Naive thymus-derived CD4-positive, alpha-beta T cell (primary cell): ENCODE measurements at regions of chr9 and their contacts with region 1.

Region 1: DNA sequence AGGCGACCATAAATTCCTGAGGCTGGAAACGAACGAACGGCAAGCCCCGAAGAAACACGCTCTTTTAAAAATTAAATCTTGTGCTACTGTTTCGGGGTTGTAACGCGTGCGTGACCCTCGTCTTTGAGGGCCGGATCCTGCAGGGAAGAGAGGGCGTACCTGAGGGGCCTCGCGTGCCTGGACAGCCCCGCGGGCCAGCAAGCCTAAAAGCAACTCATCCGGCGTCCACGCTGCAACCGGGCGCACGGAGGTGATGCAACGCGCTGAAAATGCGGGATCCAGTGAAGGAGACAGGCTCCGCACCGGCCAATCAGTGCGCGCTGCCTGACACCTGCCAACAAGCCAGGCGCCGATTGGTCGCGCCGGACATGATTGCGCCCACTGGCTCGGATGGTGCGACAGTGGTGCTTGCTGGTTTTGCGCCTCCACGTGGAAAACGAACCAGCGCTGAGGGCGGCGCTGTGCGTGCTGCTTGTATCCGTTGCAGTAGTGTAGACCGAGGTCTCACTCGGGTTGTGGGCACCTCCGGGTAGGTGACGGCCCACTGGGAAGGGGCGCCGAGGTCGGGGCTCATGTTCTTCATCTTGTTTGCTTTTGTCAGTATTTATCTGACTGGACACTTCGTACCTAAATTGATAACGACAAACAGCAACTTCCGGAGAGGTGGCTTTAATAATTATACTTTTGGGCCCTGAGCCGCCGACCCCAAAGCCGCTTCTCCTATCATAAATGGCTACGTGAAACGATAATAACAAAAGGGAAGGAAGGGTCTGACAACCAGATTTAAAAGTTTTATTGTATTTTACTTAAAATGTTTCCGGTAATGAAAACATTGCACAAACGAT is at the start of gene IARS1:
- DNase-seq: peak; percentile 97 to 100 (median 100)
- ATAC-seq: peak; percentile 98
- H3K4me3 ChIP-seq: peak within 1 kb of the TSS; percentile 61
- H3K4me3 Mint-ChIP-seq: peak within 1 kb of the TSS; percentile 85 to 99 (median 98)
- H3K27ac ChIP-seq: peak within 1 kb of the TSS; percentile 78
- H3K27ac Mint-ChIP-seq: peak within 1 kb of the TSS; percentile 95 to 100 (median 98)
- H3K4me1 ChIP-seq: peaks cover 17 to 33% of the 10 kb centered on the region in 2 donors
- H3K4me1 Mint-ChIP-seq: peaks cover 23 to 68% (median 62%) of the 10 kb centered on the region in 7 donors
- H3K27me3 ChIP-seq: no peaks in the 10 kb centered on the region
- H3K27me3 Mint-ChIP-seq: no peaks in the 10 kb centered on the region
- total RNA-seq, gene IARS1: 52.4 to 145 (median 97.7) TPM

Region 2: DNA sequence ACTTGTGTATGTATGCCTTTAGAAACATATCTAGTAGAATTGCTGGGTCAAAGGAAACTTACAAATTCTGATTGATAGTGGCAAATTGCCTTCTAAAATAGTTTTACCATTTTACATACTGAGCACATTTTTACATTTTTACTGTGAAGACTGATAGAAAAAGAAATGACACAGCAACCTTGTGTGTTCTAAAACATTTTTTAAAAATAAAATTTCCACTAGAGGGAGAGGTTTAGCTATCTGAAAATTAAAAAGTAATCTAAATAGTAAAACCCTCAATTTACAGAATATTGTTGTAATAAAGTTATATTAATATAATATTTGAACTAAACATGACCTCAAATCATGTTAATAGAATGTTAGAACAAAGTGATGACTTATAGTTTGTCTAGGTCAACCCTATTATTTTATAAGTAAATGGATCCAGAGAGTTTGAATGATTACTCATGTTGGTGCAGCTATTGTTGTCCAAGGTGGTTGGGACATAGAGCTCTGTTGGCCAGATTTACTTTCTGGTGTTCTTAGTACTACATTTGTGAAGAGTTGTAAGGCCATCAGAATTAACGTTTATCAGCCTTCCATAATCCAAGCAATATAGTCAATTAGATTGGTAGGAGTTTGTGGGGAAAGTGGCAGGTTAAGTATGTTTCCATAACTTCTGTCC is 49.3 kb after region 1 on chr9:
- CTCF ChIA-PET with region 1: no interaction called
- POLR2A ChIA-PET with region 1: no interaction called
- intact Hi-C with region 1: no loop called
- DNase-seq: no peak
- ATAC-seq: no peak
- H3K4me3 ChIP-seq: no peak overlapping the region
- H3K4me3 Mint-ChIP-seq: no peak overlapping the region
- H3K27ac ChIP-seq: no peak overlapping the region
- H3K27ac Mint-ChIP-seq: no peak overlapping the region
- H3K4me1 ChIP-seq: no peaks in the 10 kb centered on the region
- H3K4me1 Mint-ChIP-seq: peaks cover 0 to 2% (median 0%) of the 10 kb centered on the region in 7 donors
- H3K27me3 ChIP-seq: no peaks in the 10 kb centered on the region
- H3K27me3 Mint-ChIP-seq: no peaks in the 10 kb centered on the region

Region 3: GRCh38 chr9:92438900-92439526 is 145.3 kb after region 1 on chr9:
- CTCF ChIA-PET with region 1: interaction called, 4 read pairs
- POLR2A ChIA-PET with region 1: no interaction called
- intact Hi-C with region 1: loop called in 1 of 2 experiments (anchors 1 kb)
- DNase-seq: peak in 2 of 9 donors; percentile 10 to 29
- ATAC-seq: no peak
- H3K4me3 ChIP-seq: no peak overlapping the region
- H3K4me3 Mint-ChIP-seq: no peak overlapping the region
- H3K27ac ChIP-seq: no peak overlapping the region
- H3K27ac Mint-ChIP-seq: peak overlapping the region in 1 of 9 donors; percentile 57
- H3K4me1 ChIP-seq: peaks cover 0 to 9% of the 10 kb centered on the region in 2 donors
- H3K4me1 Mint-ChIP-seq: peaks cover 0 to 10% (median 0%) of the 10 kb centered on the region in 7 donors
- H3K27me3 ChIP-seq: no peaks in the 10 kb centered on the region
- H3K27me3 Mint-ChIP-seq: no peaks in the 10 kb centered on the region

Region 4: GRCh38 chr9:92634712-92635605 is 341.3 kb after region 1 on chr9:
- CTCF ChIA-PET with region 1: no interaction called
- POLR2A ChIA-PET with region 1: no interaction called
- intact Hi-C with region 1: loop called in 1 of 2 experiments (anchors 5 kb)
- DNase-seq: peak; percentile 17 to 67 (median 46)
- ATAC-seq: peak; percentile 86
- H3K4me3 ChIP-seq: no peak overlapping the region
- H3K4me3 Mint-ChIP-seq: no peak overlapping the region
- H3K27ac ChIP-seq: no peak overlapping the region
- H3K27ac Mint-ChIP-seq: no peak overlapping the region
- H3K4me1 ChIP-seq: no peaks in the 10 kb centered on the region
- H3K4me1 Mint-ChIP-seq: peaks cover 0 to 12% (median 0%) of the 10 kb centered on the region in 7 donors
- H3K27me3 ChIP-seq: no peaks in the 10 kb centered on the region
- H3K27me3 Mint-ChIP-seq: no peaks in the 10 kb centered on the region

Region 5: GRCh38 chr9:92669890-92670708 is 376.4 kb after region 1 on chr9 and contains the start of gene IPPK:
- CTCF ChIA-PET with region 1: no interaction called
- POLR2A ChIA-PET with region 1: no interaction called
- intact Hi-C with region 1: loop called (anchors 1 kb)
- DNase-seq: peak; percentile 92 to 99 (median 96)
- ATAC-seq: peak; percentile 98
- H3K4me3 ChIP-seq: peak within 1 kb of the TSS; percentile 100
- H3K4me3 Mint-ChIP-seq: peak within 1 kb of the TSS; percentile 83 to 98 (median 95)
- H3K27ac ChIP-seq: peak within 1 kb of the TSS; percentile 91
- H3K27ac Mint-ChIP-seq: peak within 1 kb of the TSS; percentile 90 to 98 (median 95)
- H3K4me1 ChIP-seq: peaks cover 16 to 23% of the 10 kb centered on the region in 2 donors
- H3K4me1 Mint-ChIP-seq: peaks cover 27 to 46% (median 36%) of the 10 kb centered on the region in 7 donors
- H3K27me3 ChIP-seq: no peaks in the 10 kb centered on the region
- H3K27me3 Mint-ChIP-seq: no peaks in the 10 kb centered on the region
- total RNA-seq, gene IPPK: 5.9 to 12.8 (median 7.4) TPM